ENCODE measurements at regions of chr20 and their contacts with region 1.

Region 1: GRCh38 chr20:52031563-52032303 is 159.8 kb downstream of the ZFP64 start:
- DNase-seq: peak; percentile 82 to 90
- H3K4me3 ChIP-seq: peak overlapping the region; percentile 0
- H3K4me3 Mint-ChIP-seq: peak overlapping the region; percentile 64
- H3K27ac Mint-ChIP-seq: peak overlapping the region; percentile 83
- H3K4me1 ChIP-seq: peaks cover 44% of the 10 kb centered on the region
- H3K4me1 Mint-ChIP-seq: peaks cover 44% of the 10 kb centered on the region
- H3K27me3 ChIP-seq: no peaks in the 10 kb centered on the region
- H3K27me3 Mint-ChIP-seq: no peaks in the 10 kb centered on the region
- CTCF ChIP-seq: no peak

Region 2: GRCh38 chr20:51667002-51667408 is 364.7 kb before region 1 on chr20:
- CTCF ChIA-PET with region 1: no interaction called
- POLR2A ChIA-PET with region 1: interaction called, 10 read pairs
- intact Hi-C with region 1: no loop called
- DNase-seq: peak; percentile 76 to 82
- H3K4me3 ChIP-seq: no peak overlapping the region
- H3K4me3 Mint-ChIP-seq: no peak overlapping the region
- H3K27ac Mint-ChIP-seq: peak overlapping the region; percentile 8
- H3K4me1 ChIP-seq: peaks cover 36% of the 10 kb centered on the region
- H3K4me1 Mint-ChIP-seq: peaks cover 36% of the 10 kb centered on the region
- H3K27me3 ChIP-seq: no peaks in the 10 kb centered on the region
- H3K27me3 Mint-ChIP-seq: no peaks in the 10 kb centered on the region
- CTCF ChIP-seq: no peak

Region 3: DNA sequence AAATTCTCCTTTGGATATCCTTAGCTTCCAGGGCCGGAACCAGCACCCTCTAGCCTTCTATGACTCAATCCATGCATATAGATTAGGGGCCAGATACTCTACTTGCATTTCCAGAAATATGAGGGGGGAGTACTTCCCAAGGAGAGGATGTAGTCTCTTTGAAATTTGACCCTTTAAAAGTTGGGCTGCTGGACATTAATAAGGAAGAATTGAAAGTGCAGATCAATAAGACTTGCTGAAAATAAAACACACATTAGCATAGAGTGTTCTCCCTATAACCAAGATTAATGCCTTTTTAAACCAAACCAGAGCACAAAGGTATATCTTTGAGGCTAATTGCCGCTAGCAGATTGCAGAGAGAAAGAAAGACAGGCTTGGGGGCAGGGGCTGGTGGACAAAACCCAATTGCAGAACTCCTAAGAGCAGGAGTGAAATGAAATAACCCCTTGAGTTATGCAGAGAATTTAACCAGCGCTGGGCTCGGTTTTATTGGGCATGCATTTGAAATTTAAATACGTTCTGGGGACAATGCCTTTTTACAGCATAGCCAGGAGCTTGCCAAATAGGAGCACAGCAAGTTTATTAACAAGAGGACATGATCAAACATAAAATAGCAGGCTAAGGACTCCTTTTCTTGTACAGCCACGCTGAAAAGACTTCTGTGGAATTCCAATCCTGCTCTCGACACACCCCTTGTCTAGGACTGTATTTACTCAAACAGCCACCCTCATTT is 121.2 kb before region 1 on chr20:
- CTCF ChIA-PET with region 1: no interaction called
- POLR2A ChIA-PET with region 1: no interaction called
- intact Hi-C with region 1: loop called (anchors 2 kb)
- DNase-seq: peak; percentile 78 to 80
- H3K4me3 ChIP-seq: 0 out of 2 replicates have a peak overlapping the region, but pooled peaks have one; percentile 6
- H3K4me3 Mint-ChIP-seq: peak overlapping the region; percentile 68
- H3K27ac Mint-ChIP-seq: peak overlapping the region; percentile 82
- H3K4me1 ChIP-seq: peaks cover 39% of the 10 kb centered on the region
- H3K4me1 Mint-ChIP-seq: peaks cover 47% of the 10 kb centered on the region
- H3K27me3 ChIP-seq: no peaks in the 10 kb centered on the region
- H3K27me3 Mint-ChIP-seq: no peaks in the 10 kb centered on the region
- CTCF ChIP-seq: no peak

Region 4: DNA sequence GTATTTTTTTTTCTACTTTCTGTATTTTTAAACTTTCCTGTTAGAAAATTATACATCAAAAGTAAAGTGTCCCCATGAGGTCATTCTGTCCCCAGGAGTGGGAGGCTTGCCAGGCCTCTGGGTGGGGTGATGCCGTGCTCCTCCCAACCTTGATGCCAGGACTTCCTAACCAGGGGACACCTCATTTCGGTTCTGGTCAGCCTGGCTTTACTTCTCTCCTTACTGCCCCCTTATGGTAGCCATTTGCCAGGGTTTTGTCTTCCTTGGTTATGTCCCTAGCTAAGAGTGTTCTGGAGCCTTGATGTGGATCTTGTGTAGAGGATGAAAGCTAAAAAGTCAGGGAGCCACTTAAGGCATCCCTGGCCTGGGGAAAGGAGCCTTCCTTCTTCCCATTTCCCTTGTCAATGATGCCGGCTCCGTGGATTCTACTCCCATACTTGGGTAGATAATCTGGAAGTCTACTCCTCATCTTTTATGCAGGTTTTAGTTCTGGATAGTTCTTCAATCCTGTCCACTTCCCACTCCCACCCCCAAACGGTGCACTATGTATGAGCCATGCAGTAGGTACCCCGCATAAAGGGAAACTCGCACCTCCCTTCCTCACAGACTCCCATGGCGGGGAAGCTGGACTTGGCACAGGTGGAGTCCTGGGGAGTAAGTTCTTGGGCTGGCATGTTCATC is 65.3 kb before region 1 on chr20:
- CTCF ChIA-PET with region 1: interaction called, 11 read pairs
- POLR2A ChIA-PET with region 1: no interaction called
- intact Hi-C with region 1: no loop called
- DNase-seq: peak; percentile 87
- H3K4me3 ChIP-seq: no peak overlapping the region
- H3K4me3 Mint-ChIP-seq: no peak overlapping the region
- H3K27ac Mint-ChIP-seq: no peak overlapping the region
- H3K4me1 ChIP-seq: peaks cover 6% of the 10 kb centered on the region; the same call in 1 of the 2 replicates
- H3K4me1 Mint-ChIP-seq: peaks cover 11% of the 10 kb centered on the region
- H3K27me3 ChIP-seq: no peaks in the 10 kb centered on the region
- H3K27me3 Mint-ChIP-seq: no peaks in the 10 kb centered on the region
- CTCF ChIP-seq: peak; percentile 86 to 88

Region 5: DNA sequence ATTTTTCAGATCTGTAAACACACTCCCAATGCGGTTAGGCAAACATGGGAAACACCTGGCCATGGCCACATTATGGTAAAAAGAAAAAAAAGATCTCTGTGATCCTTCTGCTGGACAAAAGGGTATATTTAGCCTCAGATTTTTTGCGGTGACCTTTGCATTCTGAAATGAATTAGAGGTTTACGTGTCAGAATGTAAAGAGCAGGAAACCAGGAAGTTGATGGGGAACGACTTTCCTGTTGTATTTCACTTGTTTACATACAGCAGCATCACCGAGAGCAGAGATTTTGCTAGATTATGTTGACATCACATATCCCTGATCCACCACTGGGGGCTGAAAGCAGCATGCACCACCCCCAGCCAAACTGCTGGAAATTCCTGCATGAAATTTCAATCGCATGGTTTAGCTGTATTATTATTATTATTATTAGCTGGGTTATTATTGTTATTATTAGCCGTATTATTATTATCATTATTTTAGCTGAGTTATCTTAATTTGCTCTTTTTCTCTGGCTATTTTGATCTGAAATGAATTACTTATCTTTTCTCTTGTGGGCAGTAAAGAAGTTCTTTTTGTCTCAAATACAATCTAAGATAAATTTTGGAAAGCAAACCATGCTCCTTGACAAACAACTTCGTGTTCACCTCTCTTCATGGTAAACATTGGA is 29.6 kb before region 1 on chr20:
- CTCF ChIA-PET with region 1: no interaction called
- POLR2A ChIA-PET with region 1: no interaction called
- intact Hi-C with region 1: loop called (anchors 2 kb)
- DNase-seq: peak; percentile 59 to 70
- H3K4me3 ChIP-seq: 0 out of 2 replicates have a peak overlapping the region, but pooled peaks have one; percentile 3
- H3K4me3 Mint-ChIP-seq: peak overlapping the region; percentile 55
- H3K27ac Mint-ChIP-seq: peak overlapping the region; percentile 19
- H3K4me1 ChIP-seq: peaks cover 7% of the 10 kb centered on the region
- H3K4me1 Mint-ChIP-seq: peaks cover 16% of the 10 kb centered on the region
- H3K27me3 ChIP-seq: no peaks in the 10 kb centered on the region
- H3K27me3 Mint-ChIP-seq: no peaks in the 10 kb centered on the region
- CTCF ChIP-seq: peak; percentile 68 to 79

Region 6: GRCh38 chr20:52015155-52015554 is 16.6 kb before region 1 on chr20:
- CTCF ChIA-PET with region 1: no interaction called
- POLR2A ChIA-PET with region 1: interaction called, 7 read pairs
- intact Hi-C with region 1: loop called (anchors 1 kb)
- DNase-seq: peak in 1 of 2 experiments; percentile 63
- H3K4me3 ChIP-seq: no peak overlapping the region
- H3K4me3 Mint-ChIP-seq: peak overlapping the region; percentile 6
- H3K27ac Mint-ChIP-seq: peak overlapping the region; percentile 12
- H3K4me1 ChIP-seq: peaks cover 31% of the 10 kb centered on the region
- H3K4me1 Mint-ChIP-seq: peaks cover 36% of the 10 kb centered on the region
- H3K27me3 ChIP-seq: no peaks in the 10 kb centered on the region
- H3K27me3 Mint-ChIP-seq: no peaks in the 10 kb centered on the region
- CTCF ChIP-seq: no peak

Region 7: GRCh38 chr20:52060794-52061714 is 29.3 kb after region 1 on chr20:
- CTCF ChIA-PET with region 1: interaction called, 12 read pairs
- POLR2A ChIA-PET with region 1: interaction called, 9 read pairs
- intact Hi-C with region 1: loop called (anchors 1 kb)
- DNase-seq: peak; percentile 83 to 86
- H3K4me3 ChIP-seq: no peak overlapping the region
- H3K4me3 Mint-ChIP-seq: no peak overlapping the region
- H3K27ac Mint-ChIP-seq: peak overlapping the region; percentile 12
- H3K4me1 ChIP-seq: peaks cover 8% of the 10 kb centered on the region; the same call in 1 of the 2 replicates
- H3K4me1 Mint-ChIP-seq: peaks cover 8% of the 10 kb centered on the region
- H3K27me3 ChIP-seq: no peaks in the 10 kb centered on the region
- H3K27me3 Mint-ChIP-seq: no peaks in the 10 kb centered on the region
- CTCF ChIP-seq: peak; percentile 95 to 98

Measured in Caco-2 (cell line).